ENCODE measurements at regions of chr16 and their contacts with region 1.

Region 1: DNA sequence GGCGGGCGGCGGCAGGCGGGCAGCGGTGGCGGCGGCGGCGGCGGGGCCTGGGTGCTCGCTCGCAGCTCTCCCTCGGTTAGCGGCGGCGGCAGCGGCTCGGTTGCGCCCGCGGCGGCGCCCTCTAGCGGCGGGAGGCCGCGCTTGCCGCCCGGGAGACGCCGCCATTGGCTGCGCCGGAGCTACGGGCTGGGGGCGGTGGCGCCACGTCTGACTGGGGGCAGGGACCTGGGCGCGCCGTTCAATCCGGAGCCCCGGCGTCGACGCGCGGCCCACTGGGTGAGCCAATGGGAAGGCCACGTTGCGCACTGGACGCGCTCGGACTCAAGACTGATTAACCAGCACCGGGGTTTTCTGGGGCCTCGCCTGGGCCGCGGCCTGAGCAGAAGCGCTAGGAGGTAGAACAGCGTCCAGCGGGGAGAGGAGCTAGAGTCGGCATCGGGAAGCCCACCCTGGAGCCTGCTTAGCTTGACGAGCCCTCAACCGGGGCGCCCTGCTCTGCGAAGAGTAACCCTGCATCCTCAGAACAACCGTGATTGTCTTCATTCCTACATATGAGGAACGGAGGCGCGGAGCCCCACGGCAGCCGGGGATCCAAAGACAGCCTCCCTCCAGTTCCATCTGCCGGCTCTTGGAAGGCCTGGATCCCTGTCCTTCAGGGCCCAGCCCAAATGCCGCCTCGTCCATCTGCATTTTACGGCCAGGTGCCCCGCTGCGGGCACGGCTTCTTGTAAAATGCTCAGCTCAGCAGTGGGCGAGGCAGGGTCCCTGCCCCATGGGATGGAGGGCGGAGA is at the start of gene ZC3H7A:
- DNase-seq: peak; percentile 93 to 95 (median 94)
- H3K4me3 ChIP-seq: peak within 1 kb of the TSS; percentile 62 to 91
- H3K4me3 Mint-ChIP-seq: peak within 1 kb of the TSS; percentile 89 to 98 (median 96)
- H3K27ac ChIP-seq: peak within 1 kb of the TSS; percentile 99
- H3K27ac Mint-ChIP-seq: peak within 1 kb of the TSS; percentile 97 to 99 (median 99)
- H3K4me1 ChIP-seq: peaks cover 66% of the 10 kb centered on the region
- H3K4me1 Mint-ChIP-seq: peaks cover 46 to 84% (median 66%) of the 10 kb centered on the region in 4 donors
- H3K27me3 ChIP-seq: no peaks in the 10 kb centered on the region
- H3K27me3 Mint-ChIP-seq: no peaks in the 10 kb centered on the region
- total RNA-seq, gene ZC3H7A: 85.0 to 92.1 TPM

Region 2: GRCh38 chr16:10944249-10945064 is 852.9 kb before region 1 on chr16 and contains the start of gene CLEC16A:
- CTCF ChIA-PET with region 1: no interaction called
- POLR2A ChIA-PET with region 1: interaction called, 3 read pairs
- intact Hi-C with region 1: loop called (anchors 5 kb)
- DNase-seq: peak; percentile 94 to 97 (median 95)
- H3K4me3 ChIP-seq: peak within 1 kb of the TSS; percentile 81 to 89
- H3K4me3 Mint-ChIP-seq: peak within 1 kb of the TSS; percentile 83 to 96 (median 90)
- H3K27ac ChIP-seq: peak within 1 kb of the TSS; percentile 83
- H3K27ac Mint-ChIP-seq: peak within 1 kb of the TSS; percentile 66 to 94 (median 88)
- H3K4me1 ChIP-seq: peaks cover 74% of the 10 kb centered on the region
- H3K4me1 Mint-ChIP-seq: peaks cover 49 to 86% (median 67%) of the 10 kb centered on the region in 4 donors
- H3K27me3 ChIP-seq: no peaks in the 10 kb centered on the region
- H3K27me3 Mint-ChIP-seq: no peaks in the 10 kb centered on the region
- total RNA-seq, gene CLEC16A: 24.8 to 28.4 TPM

Region 3: GRCh38 chr16:11632464-11632939 is 164.9 kb before region 1 on chr16:
- CTCF ChIA-PET with region 1: no interaction called
- POLR2A ChIA-PET with region 1: no interaction called
- intact Hi-C with region 1: no loop called
- DNase-seq: no peak
- H3K4me3 ChIP-seq: no peak overlapping the region
- H3K4me3 Mint-ChIP-seq: no peak overlapping the region
- H3K27ac ChIP-seq: no peak overlapping the region
- H3K27ac Mint-ChIP-seq: no peak overlapping the region
- H3K4me1 ChIP-seq: peaks cover 8% of the 10 kb centered on the region
- H3K4me1 Mint-ChIP-seq: peaks cover 18 to 36% (median 26%) of the 10 kb centered on the region in 4 donors
- H3K27me3 ChIP-seq: no peaks in the 10 kb centered on the region
- H3K27me3 Mint-ChIP-seq: no peaks in the 10 kb centered on the region

Region 4: DNA sequence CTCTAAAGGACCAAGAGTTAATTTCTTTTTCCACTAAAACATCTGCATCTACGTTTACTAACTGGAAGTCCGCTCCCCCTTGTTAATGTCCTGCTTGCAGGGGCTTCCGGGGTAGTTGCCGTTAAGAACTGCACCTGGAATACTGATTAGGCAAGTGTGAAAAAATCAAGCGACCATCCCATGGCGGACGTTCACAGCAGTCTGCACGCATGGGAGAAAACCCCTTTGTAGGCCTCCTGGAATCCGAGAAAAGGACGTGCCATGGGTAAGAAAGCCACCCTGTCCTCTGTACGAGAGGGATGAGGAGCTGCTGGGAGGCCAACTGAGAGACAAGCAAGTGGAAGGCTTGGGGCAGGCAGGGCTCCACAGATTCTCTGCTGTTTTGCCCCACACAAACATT is 114.2 kb before region 1 on chr16:
- CTCF ChIA-PET with region 1: no interaction called
- POLR2A ChIA-PET with region 1: no interaction called
- intact Hi-C with region 1: no loop called
- DNase-seq: no peak
- H3K4me3 ChIP-seq: no peak overlapping the region
- H3K4me3 Mint-ChIP-seq: no peak overlapping the region
- H3K27ac ChIP-seq: no peak overlapping the region
- H3K27ac Mint-ChIP-seq: peak overlapping the region; percentile 14 to 82 (median 32)
- H3K4me1 ChIP-seq: peaks cover 36% of the 10 kb centered on the region
- H3K4me1 Mint-ChIP-seq: peaks cover 20 to 65% (median 40%) of the 10 kb centered on the region in 4 donors
- H3K27me3 ChIP-seq: no peaks in the 10 kb centered on the region
- H3K27me3 Mint-ChIP-seq: no peaks in the 10 kb centered on the region

Region 5: GRCh38 chr16:11742539-11743307 is 54.6 kb before region 1 on chr16 and contains the start of gene TXNDC11:
- CTCF ChIA-PET with region 1: interaction called, 27 read pairs
- POLR2A ChIA-PET with region 1: interaction called, 94 read pairs
- intact Hi-C with region 1: loop called (anchors 1 kb)
- DNase-seq: peak; percentile 98 to 100 (median 99)
- H3K4me3 ChIP-seq: peak within 1 kb of the TSS; percentile 57 to 91
- H3K4me3 Mint-ChIP-seq: peak within 1 kb of the TSS; percentile 94 to 98 (median 95)
- H3K27ac ChIP-seq: peak within 1 kb of the TSS; percentile 88
- H3K27ac Mint-ChIP-seq: peak within 1 kb of the TSS; percentile 96 to 99 (median 98)
- H3K4me1 ChIP-seq: peaks cover 53% of the 10 kb centered on the region
- H3K4me1 Mint-ChIP-seq: peaks cover 39 to 60% (median 48%) of the 10 kb centered on the region in 4 donors
- H3K27me3 ChIP-seq: no peaks in the 10 kb centered on the region
- H3K27me3 Mint-ChIP-seq: no peaks in the 10 kb centered on the region
- total RNA-seq, gene TXNDC11: 51.7 to 59.8 TPM

Region 6: DNA sequence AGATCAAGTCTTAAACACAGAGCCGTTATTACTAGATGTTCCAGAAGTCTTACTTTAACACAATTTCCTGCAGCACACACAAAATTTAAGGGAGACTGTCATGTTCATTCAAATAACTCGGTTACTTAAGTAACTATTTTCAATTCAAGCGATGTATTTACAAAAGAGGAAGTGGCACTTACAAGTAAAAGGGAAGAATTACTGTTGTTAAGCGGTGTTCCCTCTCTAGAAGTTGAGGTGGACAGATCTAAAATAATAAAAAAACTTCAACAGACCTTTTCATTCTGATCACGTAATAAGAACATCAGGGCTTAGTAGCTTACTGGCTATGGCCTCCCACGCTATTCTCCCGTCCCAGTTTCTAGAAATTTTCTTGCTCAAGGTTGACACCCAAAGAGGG is 28.5 kb before region 1 on chr16:
- CTCF ChIA-PET with region 1: interaction called, 4 read pairs
- POLR2A ChIA-PET with region 1: interaction called, 12 read pairs
- intact Hi-C with region 1: loop called (anchors 5 kb)
- DNase-seq: no peak
- H3K4me3 ChIP-seq: no peak overlapping the region
- H3K4me3 Mint-ChIP-seq: peak overlapping the region in 3 of 8 donors; percentile 6 to 31 (median 30)
- H3K27ac ChIP-seq: no peak overlapping the region
- H3K27ac Mint-ChIP-seq: peak overlapping the region in 6 of 7 donors; percentile 14 to 71 (median 37)
- H3K4me1 ChIP-seq: peaks cover 4% of the 10 kb centered on the region
- H3K4me1 Mint-ChIP-seq: peaks cover 5 to 11% (median 7%) of the 10 kb centered on the region in 4 donors
- H3K27me3 ChIP-seq: no peaks in the 10 kb centered on the region
- H3K27me3 Mint-ChIP-seq: no peaks in the 10 kb centered on the region

Region 7: DNA sequence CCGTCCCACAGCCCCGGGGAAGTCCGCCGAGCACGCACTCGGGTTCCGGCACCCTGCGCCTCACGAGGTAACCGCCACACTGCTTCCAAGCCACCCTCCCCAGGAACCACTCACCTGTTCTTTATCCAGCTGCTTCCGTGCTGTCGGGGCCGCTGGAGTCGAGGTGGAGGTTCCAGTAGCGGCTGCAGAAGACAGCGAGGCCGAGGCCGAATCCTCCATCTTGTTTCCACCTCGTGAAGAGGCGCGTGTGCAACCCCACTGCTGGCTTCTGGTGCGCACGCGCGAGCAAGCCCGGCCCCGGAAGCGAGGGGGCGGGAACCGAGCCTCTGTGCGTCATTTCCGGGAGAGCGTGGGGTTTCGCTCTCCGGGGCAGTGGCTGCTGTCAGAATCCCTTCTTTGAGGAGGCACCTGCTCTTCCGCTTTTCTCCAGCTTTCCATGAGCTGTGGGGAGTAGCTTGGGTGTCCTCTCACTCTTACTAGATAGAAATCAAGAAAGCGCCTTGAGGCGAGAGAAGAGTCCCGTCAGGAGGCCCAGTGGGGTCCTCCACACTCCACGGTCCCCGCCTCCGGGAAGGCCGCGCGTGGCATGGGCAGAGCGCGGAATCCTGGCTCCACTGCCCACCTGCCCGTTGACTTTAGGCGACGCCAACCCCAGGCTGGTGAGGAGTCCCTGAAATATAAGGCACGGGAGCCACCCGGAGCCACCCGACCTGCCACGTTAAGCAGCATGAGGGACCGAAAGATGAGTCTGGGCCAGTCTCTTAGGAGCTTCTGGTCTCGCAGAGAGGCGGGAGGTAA is 54.1 kb after region 1 on chr16 and contains the start of gene RSL1D1:
- CTCF ChIA-PET with region 1: interaction called, 4 read pairs
- POLR2A ChIA-PET with region 1: interaction called, 16 read pairs
- intact Hi-C with region 1: loop called (anchors 1 kb)
- DNase-seq: peak; percentile 92 to 97 (median 95)
- H3K4me3 ChIP-seq: peak within 1 kb of the TSS; percentile 76 to 96
- H3K4me3 Mint-ChIP-seq: peak within 1 kb of the TSS; percentile 98 to 99 (median 99)
- H3K27ac ChIP-seq: peak within 1 kb of the TSS; percentile 94
- H3K27ac Mint-ChIP-seq: peak within 1 kb of the TSS; percentile 97 to 99 (median 98)
- H3K4me1 ChIP-seq: peaks cover 54% of the 10 kb centered on the region
- H3K4me1 Mint-ChIP-seq: peaks cover 27 to 77% (median 47%) of the 10 kb centered on the region in 4 donors
- H3K27me3 ChIP-seq: no peaks in the 10 kb centered on the region
- H3K27me3 Mint-ChIP-seq: no peaks in the 10 kb centered on the region
- total RNA-seq, gene RSL1D1: 180 to 206 TPM

Region 8: DNA sequence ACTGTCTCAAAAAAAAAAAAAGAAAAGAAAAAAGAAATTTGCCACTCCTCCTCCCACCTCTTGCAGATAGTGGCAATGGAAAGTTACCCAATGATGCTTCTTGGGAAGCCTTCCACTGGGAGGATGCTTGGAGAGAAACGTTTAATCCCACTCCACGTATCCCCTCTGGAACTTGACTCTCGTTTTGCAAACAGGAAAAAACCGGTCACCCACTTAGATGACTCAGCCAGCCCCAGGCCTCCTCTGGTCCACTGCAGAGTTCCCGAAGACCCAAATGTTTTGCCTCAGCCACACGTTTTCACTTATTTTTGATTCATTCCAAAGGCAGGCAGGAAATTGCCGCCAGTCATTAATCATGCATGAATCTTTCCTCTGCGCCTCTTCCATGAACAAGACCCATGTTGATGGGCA is 158.4 kb after region 1 on chr16:
- CTCF ChIA-PET with region 1: no interaction called
- POLR2A ChIA-PET with region 1: no interaction called
- intact Hi-C with region 1: no loop called
- DNase-seq: no peak
- H3K4me3 ChIP-seq: no peak overlapping the region
- H3K4me3 Mint-ChIP-seq: no peak overlapping the region
- H3K27ac ChIP-seq: no peak overlapping the region
- H3K27ac Mint-ChIP-seq: no peak overlapping the region
- H3K4me1 ChIP-seq: no peaks in the 10 kb centered on the region
- H3K4me1 Mint-ChIP-seq: no peaks in the 10 kb centered on the region
- H3K27me3 ChIP-seq: no peaks in the 10 kb centered on the region
- H3K27me3 Mint-ChIP-seq: peaks cover 0 to 5% of the 10 kb centered on the region in 2 donors

Region 9: GRCh38 chr16:13372421-13372820 is 1575.1 kb after region 1 on chr16:
- CTCF ChIA-PET with region 1: no interaction called
- POLR2A ChIA-PET with region 1: no interaction called
- intact Hi-C with region 1: no loop called
- DNase-seq: no peak
- H3K4me3 ChIP-seq: no peak overlapping the region
- H3K4me3 Mint-ChIP-seq: no peak overlapping the region
- H3K27ac ChIP-seq: no peak overlapping the region
- H3K27ac Mint-ChIP-seq: no peak overlapping the region
- H3K4me1 ChIP-seq: no peaks in the 10 kb centered on the region
- H3K4me1 Mint-ChIP-seq: no peaks in the 10 kb centered on the region
- H3K27me3 ChIP-seq: no peaks in the 10 kb centered on the region
- H3K27me3 Mint-ChIP-seq: no peaks in the 10 kb centered on the region